ENCODE measurements at regions of chr9 and their contacts with region 1.

Region 1: GRCh38 chr9:72952914-72953313 is at the start of gene ALDH1A1:
- H3K4me3 Mint-ChIP-seq: peak within 1 kb of the TSS; percentile 67
- H3K27ac Mint-ChIP-seq: peak within 1 kb of the TSS; percentile 79
- H3K4me1 Mint-ChIP-seq: peaks cover 51% of the 10 kb centered on the region
- H3K27me3 Mint-ChIP-seq: peaks cover 4% of the 10 kb centered on the region

Region 2: GRCh38 chr9:72864327-72864726 is 88.6 kb before region 1 on chr9:
- intact Hi-C with region 1: loop called (anchors 5 kb)
- H3K4me3 Mint-ChIP-seq: no peak overlapping the region
- H3K27ac Mint-ChIP-seq: no peak overlapping the region
- H3K4me1 Mint-ChIP-seq: peaks cover 10% of the 10 kb centered on the region
- H3K27me3 Mint-ChIP-seq: no peaks in the 10 kb centered on the region

Region 3: GRCh38 chr9:72907421-72907820 is 45.5 kb before region 1 on chr9:
- intact Hi-C with region 1: loop called (anchors 5 kb)
- H3K4me3 Mint-ChIP-seq: peak overlapping the region; percentile 17
- H3K27ac Mint-ChIP-seq: peak overlapping the region; percentile 66
- H3K4me1 Mint-ChIP-seq: peaks cover 25% of the 10 kb centered on the region
- H3K27me3 Mint-ChIP-seq: no peaks in the 10 kb centered on the region